ENCODE measurements at regions of chr2 and their contacts with region 1.

Region 1: GRCh38 chr2:131148426-131148825 is 43.3 kb downstream of the PLEKHB2 start:
- DNase-seq: no peak
- H3K4me3 ChIP-seq: no peak overlapping the region
- H3K27ac ChIP-seq: no peak overlapping the region
- H3K4me1 ChIP-seq: no peaks in the 10 kb centered on the region
- H3K27me3 ChIP-seq: no peaks in the 10 kb centered on the region
- CTCF ChIP-seq: no peak
- EP300 ChIP-seq: no peak
- POLR2A ChIP-seq: no peak

Region 2: GRCh38 chr2:131127981-131128380 is 20.4 kb before region 1 on chr2:
- intact Hi-C with region 1: loop called (anchors 2 kb)
- DNase-seq: no peak
- H3K4me3 ChIP-seq: no peak overlapping the region
- H3K27ac ChIP-seq: no peak overlapping the region
- H3K4me1 ChIP-seq: no peaks in the 10 kb centered on the region
- H3K27me3 ChIP-seq: no peaks in the 10 kb centered on the region
- CTCF ChIP-seq: no peak
- EP300 ChIP-seq: no peak
- POLR2A ChIP-seq: no peak

Measured in esophagus muscularis mucosa (tissue), 4 donors.